Esophagus muscularis mucosa (tissue), 4 donors: ENCODE measurements at regions of chrX and their contacts with region 1.

Region 1: DNA sequence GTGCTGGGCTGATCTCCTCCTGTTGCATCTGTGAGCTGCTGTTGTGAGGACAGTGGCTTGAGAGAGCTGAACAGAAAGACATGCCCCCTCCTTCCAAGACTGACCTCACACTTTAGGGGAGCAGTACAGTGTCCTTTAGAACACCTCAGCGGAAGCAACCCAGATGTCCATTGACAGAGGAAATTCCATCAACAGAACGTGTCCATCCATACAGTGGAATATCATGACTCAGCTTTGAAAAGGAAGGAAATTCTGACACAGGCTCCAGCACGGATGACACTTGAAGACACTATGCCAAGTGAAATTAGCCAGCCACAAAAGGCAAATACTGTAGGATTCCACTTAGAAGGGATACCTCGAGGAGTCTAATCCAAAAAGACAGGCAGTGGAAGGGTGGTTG is 103.5 kb downstream of the GPR143 start:
- DNase-seq: no peak
- H3K4me3 ChIP-seq: no peak overlapping the region
- H3K27ac ChIP-seq: no peak overlapping the region
- H3K4me1 ChIP-seq: peaks cover 0 to 36% (median 20%) of the 10 kb centered on the region in 4 donors
- H3K27me3 ChIP-seq: peaks cover 0 to 3% (median 0%) of the 10 kb centered on the region in 4 donors
- CTCF ChIP-seq: no peak
- EP300 ChIP-seq: no peak
- POLR2A ChIP-seq: no peak

Region 2: GRCh38 chrX:9341291-9342201 is 320.6 kb before region 1 on chrX:
- intact Hi-C with region 1: loop called (anchors 10 kb)
- DNase-seq: peak; percentile 91
- H3K4me3 ChIP-seq: peak overlapping the region; percentile 22 to 52 (median 32)
- H3K27ac ChIP-seq: peak overlapping the region; percentile 79 to 86 (median 84)
- H3K4me1 ChIP-seq: peaks cover 14 to 43% (median 39%) of the 10 kb centered on the region in 4 donors
- H3K27me3 ChIP-seq: no peaks in the 10 kb centered on the region
- CTCF ChIP-seq: no peak
- EP300 ChIP-seq: no peak
- POLR2A ChIP-seq: no peak

Region 3: DNA sequence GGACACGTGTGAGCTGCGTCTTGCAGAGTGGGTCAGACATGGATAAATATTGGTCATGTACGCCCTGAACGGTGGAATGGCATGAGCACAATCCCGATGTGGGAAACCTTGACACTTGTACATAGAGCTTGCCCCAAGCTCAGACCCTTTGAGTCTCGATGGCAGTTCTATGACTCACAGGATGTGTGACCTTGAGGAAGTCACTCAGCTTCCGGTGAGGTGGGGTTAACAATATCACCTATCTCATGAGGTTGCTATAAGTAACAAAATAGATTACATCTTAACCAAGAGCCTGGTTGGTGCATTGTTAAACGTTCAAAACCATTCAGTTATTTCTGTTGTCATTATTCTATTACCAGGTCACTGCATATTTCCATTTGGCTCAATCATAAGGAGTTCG is 306.4 kb before region 1 on chrX:
- intact Hi-C with region 1: no loop called
- DNase-seq: no peak
- H3K4me3 ChIP-seq: no peak overlapping the region
- H3K27ac ChIP-seq: no peak overlapping the region
- H3K4me1 ChIP-seq: peaks cover 0 to 12% (median 11%) of the 10 kb centered on the region in 4 donors
- H3K27me3 ChIP-seq: no peaks in the 10 kb centered on the region
- CTCF ChIP-seq: no peak
- EP300 ChIP-seq: no peak
- POLR2A ChIP-seq: no peak

Region 4: GRCh38 chrX:9595131-9595530 is 67.0 kb before region 1 on chrX:
- intact Hi-C with region 1: no loop called
- DNase-seq: no peak
- H3K4me3 ChIP-seq: no peak overlapping the region
- H3K27ac ChIP-seq: no peak overlapping the region
- H3K4me1 ChIP-seq: peaks cover 0 to 8% (median 0%) of the 10 kb centered on the region in 4 donors
- H3K27me3 ChIP-seq: no peaks in the 10 kb centered on the region
- CTCF ChIP-seq: no peak
- EP300 ChIP-seq: no peak
- POLR2A ChIP-seq: no peak